Transverse colon (tissue), 4 donors: ENCODE measurements at regions of chr2 and their contacts with region 1.

Region 1: DNA sequence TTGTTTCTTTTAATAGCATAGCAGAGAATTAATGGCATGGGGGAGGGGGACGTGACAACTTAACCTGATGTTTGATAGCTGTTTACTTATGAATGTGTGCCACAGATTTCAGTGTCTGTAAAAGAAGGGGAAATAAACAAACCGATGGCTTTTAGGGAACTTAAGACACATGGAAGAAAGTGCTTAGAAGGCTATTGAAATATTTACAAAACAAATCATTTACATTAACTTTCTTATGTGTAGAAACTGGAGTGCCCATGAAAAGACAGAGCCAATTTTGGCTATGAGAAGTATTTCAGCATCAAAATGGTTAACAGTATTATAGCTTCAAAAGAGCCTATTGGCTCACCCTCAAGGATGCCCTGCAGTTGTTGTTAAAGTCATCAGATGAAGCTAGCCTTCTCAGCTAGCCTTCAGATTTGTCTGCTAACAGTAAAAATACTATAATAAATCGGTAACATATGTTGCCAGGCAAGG is 256.1 kb downstream of the MEIS1 start:
- DNase-seq: no peak
- H3K4me3 ChIP-seq: peak overlapping the region; percentile 6 to 37 (median 24)
- H3K27ac ChIP-seq: peak overlapping the region; percentile 31 to 79 (median 76)
- H3K4me1 ChIP-seq: no peaks in the 10 kb centered on the region
- H3K27me3 ChIP-seq: no peaks in the 10 kb centered on the region
- CTCF ChIP-seq: no peak
- EP300 ChIP-seq: no peak
- POLR2A ChIP-seq: peak; percentile 21

Region 2: GRCh38 chr2:66439812-66440542 is 251.1 kb before region 1 on chr2:
- in situ Hi-C with region 1: loop called in 3 of 4 experiments (anchors 10 to 25 kb)
- intact Hi-C with region 1: loop called (anchors 5 kb)
- DNase-seq: no peak
- H3K4me3 ChIP-seq: peak overlapping the region; percentile 26 to 73 (median 58)
- H3K27ac ChIP-seq: peak overlapping the region; percentile 91 to 96 (median 93)
- H3K4me1 ChIP-seq: peaks cover 0 to 4% (median 0%) of the 10 kb centered on the region in 4 donors
- H3K27me3 ChIP-seq: peaks cover 84% of the 10 kb centered on the region
- CTCF ChIP-seq: no peak
- EP300 ChIP-seq: no peak
- POLR2A ChIP-seq: no peak

Region 3: GRCh38 chr2:66574701-66575624 is 116.1 kb before region 1 on chr2:
- in situ Hi-C with region 1: no loop called
- intact Hi-C with region 1: loop called (anchors 2 kb)
- DNase-seq: peak; percentile 44
- H3K4me3 ChIP-seq: peak overlapping the region; percentile 34 to 65 (median 46)
- H3K27ac ChIP-seq: peak overlapping the region; percentile 79 to 96 (median 90)
- H3K4me1 ChIP-seq: peaks cover 0 to 33% (median 9%) of the 10 kb centered on the region in 4 donors
- H3K27me3 ChIP-seq: peaks cover 70% of the 10 kb centered on the region
- CTCF ChIP-seq: peak in 4 of 5 experiments; percentile 15 to 34 (median 26)
- EP300 ChIP-seq: no peak
- POLR2A ChIP-seq: no peak